ENCODE measurements at regions of chr6 and their contacts with region 1.

Region 1: GRCh38 chr6:155265843-155266535 is 2.2 kb downstream of the CLDN20 start:
- DNase-seq: no peak
- H3K27ac ChIP-seq: no peak overlapping the region
- CTCF ChIP-seq: no peak

Region 2: GRCh38 chr6:154555073-154555677 is 710.8 kb before region 1 on chr6:
- CTCF ChIA-PET with region 1: no interaction called
- POLR2A ChIA-PET with region 1: no interaction called
- DNase-seq: peak; percentile 78
- H3K27ac ChIP-seq: no peak overlapping the region
- CTCF ChIP-seq: no peak

Region 3: DNA sequence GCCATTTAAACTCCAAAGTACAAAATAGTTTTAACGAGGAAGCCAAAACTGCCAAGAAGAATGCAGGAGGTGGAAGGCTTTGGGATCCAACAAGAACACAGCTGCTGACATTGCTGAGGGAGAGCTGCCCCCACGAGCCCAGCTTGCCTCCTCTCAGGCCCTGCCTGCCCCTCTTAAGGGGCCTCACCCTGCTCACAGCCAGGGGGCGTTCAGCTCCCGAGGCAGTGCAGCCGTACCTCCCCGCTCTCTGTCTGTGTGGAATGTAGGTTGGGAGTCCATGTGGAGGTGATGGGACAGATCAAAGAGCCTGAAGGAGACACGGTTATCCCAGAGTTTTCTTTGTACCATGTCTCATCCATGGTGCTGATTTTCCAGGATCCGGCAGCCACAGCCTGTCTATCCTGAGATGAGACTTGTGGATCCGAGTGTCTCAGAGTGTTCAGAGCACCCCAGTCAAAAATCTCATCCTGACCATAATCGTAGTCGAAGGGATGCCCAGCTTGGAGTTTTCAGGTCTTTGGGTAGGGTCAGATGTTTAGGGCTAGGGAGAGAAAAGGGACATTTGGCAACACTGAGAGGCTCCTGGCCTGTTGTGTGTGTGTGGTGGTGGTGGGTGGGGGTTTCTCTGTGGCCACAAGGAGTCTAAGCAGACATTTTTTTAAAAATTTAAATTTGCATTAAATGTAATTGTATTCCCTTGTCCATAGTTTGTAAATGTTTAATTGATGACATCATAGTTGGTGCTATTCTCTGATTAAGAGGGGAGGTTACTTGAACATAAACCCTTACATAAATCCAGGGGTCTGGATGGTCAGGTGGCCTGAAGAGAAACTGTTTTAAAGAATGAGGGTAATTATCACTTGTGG is 113.5 kb before region 1 on chr6:
- CTCF ChIA-PET with region 1: no interaction called
- POLR2A ChIA-PET with region 1: interaction called, 13 read pairs
- DNase-seq: no peak
- H3K27ac ChIP-seq: no peak overlapping the region
- CTCF ChIP-seq: no peak

Region 4: DNA sequence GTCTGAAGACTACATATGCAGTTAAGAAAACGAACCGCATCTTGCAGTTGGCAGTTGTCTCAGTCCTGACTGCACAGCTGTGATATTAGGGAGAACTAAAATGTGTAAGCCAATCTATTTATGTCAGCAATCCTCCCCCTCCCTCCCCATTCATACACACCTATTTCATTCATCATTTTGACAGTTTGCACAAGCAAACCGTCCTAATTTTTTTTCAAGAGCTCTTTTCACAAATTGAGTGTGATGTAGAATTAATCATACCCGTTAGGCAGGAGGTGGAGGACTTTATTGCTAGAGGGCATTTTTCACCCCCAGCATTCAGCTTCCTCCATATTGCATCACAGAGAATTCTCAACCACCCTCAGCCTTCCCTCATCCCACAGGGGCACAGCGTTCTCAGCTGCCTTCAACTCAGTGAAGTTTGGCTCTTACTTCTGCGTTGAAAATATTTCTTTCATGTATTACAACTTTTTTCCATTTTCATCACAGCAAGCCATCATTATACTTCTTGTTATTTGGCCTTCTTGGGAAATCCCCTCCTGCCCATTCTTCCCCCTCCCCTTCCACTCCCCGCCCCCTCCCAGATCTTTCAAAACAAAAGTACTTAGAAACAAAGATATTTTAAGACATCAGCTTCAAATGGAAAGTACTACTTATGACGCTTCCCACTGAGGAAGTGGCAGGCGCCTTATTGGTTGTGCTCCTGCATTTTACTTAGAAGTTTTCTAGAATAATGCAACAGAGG is 152.2 kb after region 1 on chr6:
- CTCF ChIA-PET with region 1: no interaction called
- POLR2A ChIA-PET with region 1: no interaction called
- DNase-seq: peak; percentile 67
- H3K27ac ChIP-seq: no peak overlapping the region
- CTCF ChIP-seq: no peak

Measured in RWPE1 (cell line).